HEK293 (cell line): ENCODE measurements at regions of chr1 and their contacts with region 1.

Region 1: DNA sequence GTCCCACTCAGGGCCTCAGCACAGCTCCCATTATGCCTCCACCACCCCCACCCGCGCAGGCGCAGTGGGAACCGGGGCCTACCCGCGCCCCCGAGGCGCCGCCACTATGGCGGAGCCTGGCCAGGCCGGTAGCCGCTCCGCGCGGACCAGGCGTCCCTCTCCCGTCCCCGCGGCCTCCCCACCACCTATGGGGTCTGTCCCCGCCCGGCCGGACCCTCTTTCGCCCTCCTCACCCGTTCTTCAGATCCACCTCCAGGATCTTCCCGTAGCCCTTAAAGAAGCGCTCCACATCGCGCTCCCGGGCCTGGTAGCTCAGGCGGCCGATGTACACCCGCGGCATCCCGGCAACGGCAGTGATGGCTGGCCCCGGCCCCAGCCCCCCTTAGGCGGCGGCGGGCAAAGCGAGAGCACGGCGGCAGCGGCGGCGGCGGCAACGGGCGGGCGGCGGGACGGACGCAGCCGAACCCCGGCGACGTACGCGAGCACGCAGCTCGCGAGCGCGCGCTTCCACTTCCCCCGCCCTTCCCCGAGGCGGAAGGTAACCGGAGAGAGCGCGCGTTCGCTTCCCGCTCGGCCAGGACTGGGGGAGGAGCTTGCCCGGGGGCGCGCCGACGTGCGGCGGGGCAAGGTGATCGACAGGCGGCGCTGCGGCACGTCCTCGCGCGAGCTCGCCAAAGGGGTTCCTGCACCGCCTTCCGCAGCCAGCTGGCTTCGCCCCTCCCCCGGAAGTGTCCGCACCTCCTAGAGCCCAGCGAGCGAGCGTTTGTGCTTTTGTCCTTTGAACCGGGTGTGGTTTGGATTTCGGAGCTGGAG is at the start of gene SRSF4:
- H3K4me3 ChIP-seq: peak within 1 kb of the TSS; percentile 100
- H3K27ac ChIP-seq: peak within 1 kb of the TSS; percentile 99
- H3K4me1 ChIP-seq: peaks cover 6% of the 10 kb centered on the region; the same call in 1 of the 2 replicates
- CTCF ChIP-seq: peak; percentile 100

Region 2: GRCh38 chr1:28736450-28737306 is 444.9 kb before region 1 on chr1 and contains the start of gene YTHDF2:
- CTCF ChIA-PET with region 1: no interaction called
- POLR2A ChIA-PET with region 1: interaction called, 10 read pairs
- H3K4me3 ChIP-seq: peak within 1 kb of the TSS; percentile 98
- H3K27ac ChIP-seq: peak within 1 kb of the TSS; percentile 95
- H3K4me1 ChIP-seq: no peaks in the 10 kb centered on the region; the same call in 1 of the 2 replicates
- CTCF ChIP-seq: peak; percentile 99

Region 3: DNA sequence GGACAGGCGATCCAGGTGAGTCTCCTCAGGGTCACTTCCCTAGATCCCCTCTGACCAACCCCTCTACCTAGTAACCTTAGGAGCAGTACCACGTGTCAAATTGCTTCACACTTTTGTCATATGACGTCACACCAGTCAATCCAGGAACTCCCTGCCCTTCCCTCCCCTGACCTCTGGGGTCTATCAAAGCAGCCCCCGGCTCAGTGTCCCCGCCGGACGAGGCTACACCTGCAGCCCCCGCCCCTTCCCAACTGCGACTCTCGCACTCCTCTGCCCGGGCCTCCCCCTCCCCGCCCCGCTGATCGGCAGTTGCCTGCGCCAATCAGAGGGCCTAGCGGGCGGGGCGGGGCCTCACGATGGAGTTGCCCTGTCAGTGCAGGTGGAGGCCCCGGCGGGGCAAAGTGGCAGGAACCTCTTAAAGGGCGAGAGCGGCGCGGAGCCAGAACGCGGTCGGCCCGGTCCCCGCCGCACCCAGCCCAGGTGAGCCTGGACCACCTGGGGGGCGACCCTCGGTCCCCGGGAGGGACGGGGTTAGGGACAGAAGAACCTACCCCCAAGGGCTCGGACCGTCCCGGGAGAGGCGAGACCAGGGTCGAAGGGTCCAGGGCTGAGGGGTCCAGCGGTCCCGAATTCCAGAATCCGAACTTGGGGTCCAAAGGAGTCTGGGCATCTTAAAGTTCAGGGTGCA is 294.7 kb before region 1 on chr1:
- CTCF ChIA-PET with region 1: interaction called, 10 read pairs
- POLR2A ChIA-PET with region 1: interaction called, 9 read pairs
- H3K4me3 ChIP-seq: peak overlapping the region; percentile 89
- H3K27ac ChIP-seq: peak overlapping the region; percentile 66; the same call in 1 of the 2 replicates
- H3K4me1 ChIP-seq: peaks cover 6% of the 10 kb centered on the region
- CTCF ChIP-seq: no peak

Region 4: GRCh38 chr1:29083317-29084195 is 98.1 kb before region 1 on chr1:
- CTCF ChIA-PET with region 1: no interaction called
- POLR2A ChIA-PET with region 1: no interaction called
- H3K4me3 ChIP-seq: no peak overlapping the region
- H3K27ac ChIP-seq: no peak overlapping the region
- H3K4me1 ChIP-seq: peaks cover 15% of the 10 kb centered on the region
- CTCF ChIP-seq: no peak

Region 5: GRCh38 chr1:29171089-29171488 is 10.5 kb before region 1 on chr1:
- CTCF ChIA-PET with region 1: interaction called, 6 read pairs
- POLR2A ChIA-PET with region 1: interaction called, 30 read pairs
- H3K4me3 ChIP-seq: no peak overlapping the region
- H3K27ac ChIP-seq: no peak overlapping the region
- H3K4me1 ChIP-seq: peaks cover 7% of the 10 kb centered on the region
- CTCF ChIP-seq: no peak

Region 6: GRCh38 chr1:29202584-29203340 is 21.1 kb after region 1 on chr1:
- CTCF ChIA-PET with region 1: interaction called, 44 read pairs
- POLR2A ChIA-PET with region 1: interaction called, 17 read pairs
- H3K4me3 ChIP-seq: no peak overlapping the region
- H3K27ac ChIP-seq: no peak overlapping the region
- H3K4me1 ChIP-seq: no peaks in the 10 kb centered on the region
- CTCF ChIP-seq: peak; percentile 89

Region 7: DNA sequence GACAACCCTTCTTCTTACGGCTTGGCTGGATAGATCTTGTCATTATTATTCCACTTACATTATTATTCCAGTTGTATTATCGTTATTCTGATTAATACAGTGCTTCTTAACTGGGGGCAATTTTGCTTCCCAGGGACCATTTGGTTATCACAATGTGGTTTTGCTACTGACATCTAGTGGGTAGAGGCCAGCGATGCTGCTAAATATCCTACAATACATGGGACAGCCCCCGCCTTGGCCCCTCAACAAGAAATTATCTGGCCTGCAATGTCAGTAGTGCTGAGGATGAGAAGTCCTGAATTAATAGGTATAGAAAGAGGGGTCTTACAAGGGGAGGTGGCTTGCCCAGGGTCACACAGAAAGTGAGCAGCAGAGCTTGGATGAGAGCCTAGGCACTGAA is 160.3 kb after region 1 on chr1:
- CTCF ChIA-PET with region 1: no interaction called
- POLR2A ChIA-PET with region 1: no interaction called
- H3K4me3 ChIP-seq: no peak overlapping the region
- H3K27ac ChIP-seq: no peak overlapping the region
- H3K4me1 ChIP-seq: no peaks in the 10 kb centered on the region
- CTCF ChIP-seq: no peak